ENCODE measurements at regions of chr1 and their contacts with region 1.

Region 1: GRCh38 chr1:67760030-67760821 is 73.0 kb downstream of the GNG12 start:
- DNase-seq: no peak
- ATAC-seq: peak; percentile 74
- H3K4me3 Mint-ChIP-seq: no peak overlapping the region
- H3K27ac Mint-ChIP-seq: no peak overlapping the region
- H3K4me1 Mint-ChIP-seq: peaks cover 7% of the 10 kb centered on the region
- H3K27me3 Mint-ChIP-seq: peaks cover 27% of the 10 kb centered on the region
- CTCF ChIP-seq: peak; percentile 64

Region 2: GRCh38 chr1:66764994-66765578 is 995.1 kb before region 1 on chr1:
- CTCF ChIA-PET with region 1: no interaction called
- POLR2A ChIA-PET with region 1: no interaction called
- intact Hi-C with region 1: loop called (anchors 10 kb)
- DNase-seq: no peak
- ATAC-seq: peak; percentile 25
- H3K4me3 Mint-ChIP-seq: no peak overlapping the region
- H3K27ac Mint-ChIP-seq: no peak overlapping the region
- H3K4me1 Mint-ChIP-seq: no peaks in the 10 kb centered on the region
- H3K27me3 Mint-ChIP-seq: no peaks in the 10 kb centered on the region
- CTCF ChIP-seq: no peak

Region 3: DNA sequence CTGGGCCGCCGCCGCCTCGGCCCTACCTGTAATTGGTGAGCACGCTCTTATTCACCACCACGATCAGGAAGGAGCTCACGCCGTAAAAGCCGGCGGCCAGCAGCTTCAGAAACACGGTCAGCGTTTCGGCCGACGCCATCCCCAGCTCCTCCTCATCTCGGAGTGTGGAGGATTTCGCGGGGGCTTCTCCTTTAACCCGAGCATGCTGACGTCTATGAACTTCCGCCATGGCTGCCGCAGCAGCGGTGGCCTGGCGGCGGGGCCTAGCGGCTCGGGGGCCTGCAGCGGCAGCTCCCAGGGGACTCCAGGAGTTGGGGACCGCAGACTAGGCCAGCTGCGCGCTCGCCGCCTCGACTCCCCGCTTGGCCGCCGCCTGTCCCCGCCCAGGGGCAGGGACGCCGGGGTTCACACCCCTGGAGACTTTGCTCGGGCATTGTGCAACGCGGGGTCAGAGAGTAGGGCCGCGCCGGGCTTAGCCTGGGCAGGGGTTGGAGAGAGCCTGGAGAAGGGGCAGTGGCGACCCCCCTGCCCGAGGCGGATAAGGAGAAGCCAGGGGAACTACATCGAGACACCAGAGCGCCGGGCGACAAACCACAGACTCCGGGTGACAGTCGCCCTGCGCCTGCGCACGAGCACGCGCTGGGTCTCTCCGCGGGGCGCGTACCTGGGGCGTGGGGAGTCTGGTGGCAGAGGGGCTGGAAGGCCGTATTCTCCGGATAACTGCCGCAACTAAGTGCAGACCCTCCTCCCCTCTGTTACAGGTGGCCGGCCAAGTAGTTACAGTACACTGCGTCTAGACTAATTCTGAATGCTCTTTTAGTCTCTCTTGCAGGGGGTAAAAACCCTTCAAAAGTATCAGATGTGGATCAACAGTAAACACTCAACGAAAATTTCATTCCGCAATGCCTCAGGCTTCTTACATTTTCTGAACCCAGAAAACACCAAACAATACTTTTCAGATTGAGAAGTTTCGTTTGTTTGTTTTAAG is 706.1 kb before region 1 on chr1 and contains the start of gene SLC35D1:
- CTCF ChIA-PET with region 1: no interaction called
- POLR2A ChIA-PET with region 1: no interaction called
- intact Hi-C with region 1: no loop called
- DNase-seq: peak; percentile 82
- ATAC-seq: peak; percentile 85
- H3K4me3 Mint-ChIP-seq: peak within 1 kb of the TSS; percentile 92
- H3K27ac Mint-ChIP-seq: peak within 1 kb of the TSS; percentile 92
- H3K4me1 Mint-ChIP-seq: peaks cover 21% of the 10 kb centered on the region
- H3K27me3 Mint-ChIP-seq: no peaks in the 10 kb centered on the region
- CTCF ChIP-seq: no peak
- total RNA-seq, gene SLC35D1: 10.1 and 11.1 TPM in 2 replicates

Region 4: GRCh38 chr1:67347688-67348472 is 412.3 kb before region 1 on chr1:
- CTCF ChIA-PET with region 1: interaction called, 3 read pairs
- POLR2A ChIA-PET with region 1: no interaction called
- intact Hi-C with region 1: loop called (anchors 2 kb)
- DNase-seq: no peak
- ATAC-seq: no peak
- H3K4me3 Mint-ChIP-seq: no peak overlapping the region
- H3K27ac Mint-ChIP-seq: no peak overlapping the region
- H3K4me1 Mint-ChIP-seq: peaks cover 7% of the 10 kb centered on the region
- H3K27me3 Mint-ChIP-seq: no peaks in the 10 kb centered on the region
- CTCF ChIP-seq: no peak

Region 5: GRCh38 chr1:67535474-67535873 is 224.8 kb before region 1 on chr1:
- CTCF ChIA-PET with region 1: interaction called, 169 read pairs
- POLR2A ChIA-PET with region 1: no interaction called
- intact Hi-C with region 1: loop called (anchors 1 kb)
- DNase-seq: no peak
- ATAC-seq: no peak
- H3K4me3 Mint-ChIP-seq: no peak overlapping the region
- H3K27ac Mint-ChIP-seq: no peak overlapping the region
- H3K4me1 Mint-ChIP-seq: peaks cover 3% of the 10 kb centered on the region
- H3K27me3 Mint-ChIP-seq: peaks cover 12% of the 10 kb centered on the region
- CTCF ChIP-seq: no peak

Region 6: GRCh38 chr1:67561704-67562113 is 198.5 kb before region 1 on chr1:
- CTCF ChIA-PET with region 1: interaction called, 99 read pairs
- POLR2A ChIA-PET with region 1: no interaction called
- intact Hi-C with region 1: loop called (anchors 1 kb)
- DNase-seq: peak; percentile 59
- ATAC-seq: peak; percentile 47
- H3K4me3 Mint-ChIP-seq: no peak overlapping the region
- H3K27ac Mint-ChIP-seq: no peak overlapping the region
- H3K4me1 Mint-ChIP-seq: peaks cover 3% of the 10 kb centered on the region
- H3K27me3 Mint-ChIP-seq: peaks cover 4% of the 10 kb centered on the region
- CTCF ChIP-seq: no peak

Region 7: DNA sequence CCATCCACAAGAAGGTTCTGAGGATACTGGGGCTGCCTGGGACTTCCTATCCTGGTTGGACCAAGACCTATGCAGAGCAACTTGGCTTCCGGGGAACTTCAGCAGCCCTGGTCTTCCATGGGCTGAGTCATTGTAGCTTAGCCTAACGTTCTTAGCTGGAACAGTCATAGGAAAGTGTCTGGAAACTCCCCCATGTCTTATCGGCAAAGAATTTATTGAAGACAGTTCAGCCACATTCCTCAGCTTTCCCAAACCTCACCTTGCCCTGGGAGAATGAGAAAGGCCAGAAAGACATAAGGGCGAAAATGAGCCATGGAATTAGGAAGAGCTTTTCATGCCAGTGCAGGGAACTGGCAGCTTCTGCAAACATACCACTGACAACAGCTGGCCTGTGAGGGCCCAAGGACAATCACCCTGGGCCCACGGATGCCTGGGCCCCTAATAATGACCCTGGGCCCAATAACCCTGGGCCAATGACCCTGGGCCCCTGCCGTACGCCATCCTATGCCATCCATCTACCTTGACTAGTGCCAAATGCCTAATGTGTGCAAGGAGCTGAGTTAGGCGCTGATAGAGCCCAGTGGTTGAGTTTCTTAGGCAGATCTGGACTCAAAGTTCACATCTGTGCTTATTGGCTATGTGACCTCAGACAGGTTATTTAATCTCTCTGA is 189.6 kb before region 1 on chr1:
- CTCF ChIA-PET with region 1: interaction called, 23 read pairs
- POLR2A ChIA-PET with region 1: no interaction called
- intact Hi-C with region 1: no loop called
- DNase-seq: no peak
- ATAC-seq: no peak
- H3K4me3 Mint-ChIP-seq: no peak overlapping the region
- H3K27ac Mint-ChIP-seq: no peak overlapping the region
- H3K4me1 Mint-ChIP-seq: no peaks in the 10 kb centered on the region
- H3K27me3 Mint-ChIP-seq: no peaks in the 10 kb centered on the region
- CTCF ChIP-seq: no peak

Region 8: GRCh38 chr1:67735806-67736627 is 24.2 kb before region 1 on chr1:
- CTCF ChIA-PET with region 1: interaction called, 15 read pairs
- POLR2A ChIA-PET with region 1: no interaction called
- intact Hi-C with region 1: no loop called
- DNase-seq: peak; percentile 24
- ATAC-seq: peak; percentile 98
- H3K4me3 Mint-ChIP-seq: peak overlapping the region; percentile 79
- H3K27ac Mint-ChIP-seq: peak overlapping the region; percentile 89
- H3K4me1 Mint-ChIP-seq: peaks cover 44% of the 10 kb centered on the region
- H3K27me3 Mint-ChIP-seq: no peaks in the 10 kb centered on the region
- CTCF ChIP-seq: no peak